CD4-positive, alpha-beta memory T cell (primary cell): ENCODE measurements at regions of chr6 and their contacts with region 1.

Region 1: GRCh38 chr6:109382576-109383437 is 540 bp upstream of the CD164 start:
- DNase-seq: peak; percentile 95 to 97 (median 96)
- H3K4me3 ChIP-seq: peak overlapping the region; percentile 77 to 96
- H3K4me3 Mint-ChIP-seq: peak overlapping the region; percentile 89 to 98 (median 98)
- H3K27ac ChIP-seq: peak overlapping the region; percentile 97
- H3K27ac Mint-ChIP-seq: peak overlapping the region; percentile 99 to 100 (median 99)
- H3K4me1 ChIP-seq: peaks cover 37% of the 10 kb centered on the region
- H3K4me1 Mint-ChIP-seq: peaks cover 27 to 54% (median 39%) of the 10 kb centered on the region in 4 donors
- H3K27me3 ChIP-seq: no peaks in the 10 kb centered on the region
- H3K27me3 Mint-ChIP-seq: no peaks in the 10 kb centered on the region

Region 2: DNA sequence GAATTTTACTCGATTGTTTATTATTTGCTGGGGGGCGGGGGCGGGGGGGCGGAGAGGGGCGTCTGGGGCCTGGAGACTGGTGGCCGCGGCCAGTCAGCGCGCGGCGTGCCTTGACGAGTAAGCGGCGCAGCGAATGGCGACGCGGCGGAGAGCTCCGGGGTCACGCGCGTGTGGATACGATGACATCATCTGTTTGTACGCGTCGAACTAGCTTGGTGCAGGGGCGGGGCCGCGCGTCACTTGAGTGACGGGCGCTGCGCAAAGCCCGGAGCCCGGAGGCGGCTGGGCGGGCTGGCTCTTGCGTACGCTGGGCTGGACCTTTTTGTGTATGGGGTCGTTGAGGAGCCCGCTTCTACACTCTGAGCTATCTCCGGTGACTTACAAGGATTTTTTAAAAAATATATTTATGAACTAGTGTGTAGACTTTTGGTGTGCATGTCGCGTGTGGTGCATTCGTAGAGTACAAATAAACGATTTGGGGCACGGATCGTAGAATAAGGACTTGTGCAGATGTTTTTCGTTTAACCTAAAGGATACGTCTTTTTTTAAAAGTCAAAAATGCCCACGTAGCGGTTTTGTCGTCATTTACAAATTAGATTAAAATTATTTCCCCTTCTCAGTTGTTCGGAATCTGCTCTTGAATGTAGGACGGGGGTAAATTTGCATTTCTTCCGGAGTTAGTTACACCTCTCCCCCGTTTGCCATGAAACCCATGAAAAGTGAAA is 824.3 kb before region 1 on chr6:
- CTCF ChIA-PET with region 1: interaction called, 3 read pairs
- POLR2A ChIA-PET with region 1: interaction called, 48 read pairs
- intact Hi-C with region 1: loop called (anchors 1 kb)
- DNase-seq: peak; percentile 96 to 98 (median 98)
- H3K4me3 ChIP-seq: peak overlapping the region; percentile 98 to 99
- H3K4me3 Mint-ChIP-seq: peak overlapping the region; percentile 92 to 98 (median 98)
- H3K27ac ChIP-seq: peak overlapping the region; percentile 97
- H3K27ac Mint-ChIP-seq: peak overlapping the region; percentile 96 to 100 (median 99)
- H3K4me1 ChIP-seq: peaks cover 25% of the 10 kb centered on the region
- H3K4me1 Mint-ChIP-seq: peaks cover 14 to 28% (median 23%) of the 10 kb centered on the region in 4 donors
- H3K27me3 ChIP-seq: no peaks in the 10 kb centered on the region
- H3K27me3 Mint-ChIP-seq: no peaks in the 10 kb centered on the region

Region 3: GRCh38 chr6:109009236-109009961 is 373.4 kb before region 1 on chr6:
- CTCF ChIA-PET with region 1: no interaction called
- POLR2A ChIA-PET with region 1: interaction called, 21 read pairs
- intact Hi-C with region 1: loop called (anchors 2 kb)
- DNase-seq: peak; percentile 90 to 92 (median 90)
- H3K4me3 ChIP-seq: peak overlapping the region; percentile 77 to 86
- H3K4me3 Mint-ChIP-seq: peak overlapping the region; percentile 94 to 100 (median 98)
- H3K27ac ChIP-seq: peak overlapping the region; percentile 96
- H3K27ac Mint-ChIP-seq: peak overlapping the region; percentile 94 to 100 (median 100)
- H3K4me1 ChIP-seq: peaks cover 67% of the 10 kb centered on the region
- H3K4me1 Mint-ChIP-seq: peaks cover 47 to 81% (median 60%) of the 10 kb centered on the region in 4 donors
- H3K27me3 ChIP-seq: no peaks in the 10 kb centered on the region
- H3K27me3 Mint-ChIP-seq: no peaks in the 10 kb centered on the region

Region 4: DNA sequence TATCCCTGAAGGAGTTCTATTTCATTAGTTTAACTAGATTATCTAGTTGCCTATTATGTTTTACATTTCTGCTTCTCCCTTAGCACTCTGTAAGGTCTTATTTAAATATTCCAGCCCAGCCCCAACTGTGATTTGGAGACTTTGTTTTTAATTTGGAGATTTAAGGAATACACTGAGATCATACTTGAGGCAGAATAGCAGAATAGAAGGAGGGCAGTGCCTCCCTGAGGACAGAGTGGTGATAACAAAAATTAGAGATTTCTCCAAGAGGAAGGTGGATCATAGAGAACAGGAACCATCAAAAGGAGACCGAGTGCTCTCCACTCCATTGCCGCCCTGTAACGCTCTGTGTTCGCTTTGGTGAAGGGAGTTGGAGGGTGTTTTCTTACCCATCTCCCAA is 14.2 kb after region 1 on chr6:
- CTCF ChIA-PET with region 1: interaction called, 22 read pairs
- POLR2A ChIA-PET with region 1: interaction called, 4 read pairs
- intact Hi-C with region 1: no loop called
- DNase-seq: no peak
- H3K4me3 ChIP-seq: no peak overlapping the region
- H3K4me3 Mint-ChIP-seq: no peak overlapping the region
- H3K27ac ChIP-seq: no peak overlapping the region
- H3K27ac Mint-ChIP-seq: no peak overlapping the region
- H3K4me1 ChIP-seq: no peaks in the 10 kb centered on the region
- H3K4me1 Mint-ChIP-seq: peaks cover 0 to 2% (median 0%) of the 10 kb centered on the region in 4 donors
- H3K27me3 ChIP-seq: no peaks in the 10 kb centered on the region
- H3K27me3 Mint-ChIP-seq: peaks cover 0 to 2% of the 10 kb centered on the region in 2 donors

Region 5: GRCh38 chr6:109491207-109491938 is 108.6 kb after region 1 on chr6:
- CTCF ChIA-PET with region 1: interaction called, 7 read pairs
- POLR2A ChIA-PET with region 1: interaction called, 22 read pairs
- intact Hi-C with region 1: no loop called
- DNase-seq: peak in 4 of 5 donors; percentile 39 to 60 (median 45)
- H3K4me3 ChIP-seq: peak overlapping the region in 1 of 2 donors; percentile 26
- H3K4me3 Mint-ChIP-seq: peak overlapping the region; percentile 22 to 76 (median 58)
- H3K27ac ChIP-seq: peak overlapping the region; percentile 30
- H3K27ac Mint-ChIP-seq: peak overlapping the region; percentile 66 to 90 (median 86)
- H3K4me1 ChIP-seq: peaks cover 20% of the 10 kb centered on the region
- H3K4me1 Mint-ChIP-seq: peaks cover 17 to 22% (median 20%) of the 10 kb centered on the region in 4 donors
- H3K27me3 ChIP-seq: no peaks in the 10 kb centered on the region
- H3K27me3 Mint-ChIP-seq: no peaks in the 10 kb centered on the region

Region 6: GRCh38 chr6:110815217-110816109 is 1432.7 kb after region 1 on chr6 and contains the start of gene CDK19:
- CTCF ChIA-PET with region 1: no interaction called
- POLR2A ChIA-PET with region 1: interaction called, 12 read pairs
- intact Hi-C with region 1: loop called (anchors 2 kb)
- DNase-seq: peak; percentile 99
- H3K4me3 ChIP-seq: peak within 1 kb of the TSS; percentile 85 to 91
- H3K4me3 Mint-ChIP-seq: peak within 1 kb of the TSS; percentile 95 to 100 (median 98)
- H3K27ac ChIP-seq: peak within 1 kb of the TSS; percentile 75
- H3K27ac Mint-ChIP-seq: peak within 1 kb of the TSS; percentile 98 to 100 (median 99)
- H3K4me1 ChIP-seq: peaks cover 26% of the 10 kb centered on the region
- H3K4me1 Mint-ChIP-seq: peaks cover 14 to 38% (median 20%) of the 10 kb centered on the region in 4 donors
- H3K27me3 ChIP-seq: no peaks in the 10 kb centered on the region
- H3K27me3 Mint-ChIP-seq: no peaks in the 10 kb centered on the region
- total RNA-seq, gene CDK19: 23.8 to 24.3 TPM